PC-9 (cell line): ENCODE measurements at regions of chr18 and their contacts with region 1.

Region 1: GRCh38 chr18:21538230-21538629 is 62.3 kb downstream of the ESCO1 start:
- DNase-seq: no peak
- H3K4me3 ChIP-seq: no peak overlapping the region
- H3K27ac ChIP-seq: no peak overlapping the region
- H3K4me1 ChIP-seq: no peaks in the 10 kb centered on the region
- H3K27me3 ChIP-seq: no peaks in the 10 kb centered on the region
- CTCF ChIP-seq: no peak

Region 2: DNA sequence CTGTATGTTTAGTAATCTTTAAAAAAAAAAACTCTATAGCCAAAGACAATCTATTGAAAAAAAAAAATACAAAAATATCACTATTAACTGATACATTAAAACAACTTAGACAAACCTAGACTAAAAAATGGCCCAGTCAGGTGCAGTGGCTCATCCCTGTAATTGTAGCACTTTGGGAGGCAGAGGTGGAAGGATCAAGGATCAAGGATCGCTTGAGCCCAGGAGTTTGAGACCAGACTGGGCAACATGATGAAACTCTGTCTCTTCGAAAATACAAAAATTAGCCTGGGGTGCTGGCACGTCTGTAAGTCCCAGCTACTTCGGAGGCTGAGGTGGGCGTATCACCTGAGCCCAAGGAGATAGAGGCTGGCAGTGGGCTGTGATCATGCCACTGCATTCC is 46.2 kb after region 1 on chr18:
- CTCF ChIA-PET with region 1: no interaction called
- POLR2A ChIA-PET with region 1: no interaction called
- intact Hi-C with region 1: loop called (anchors 10 kb)
- DNase-seq: no peak
- H3K4me3 ChIP-seq: no peak overlapping the region
- H3K27ac ChIP-seq: no peak overlapping the region
- H3K4me1 ChIP-seq: no peaks in the 10 kb centered on the region
- H3K27me3 ChIP-seq: no peaks in the 10 kb centered on the region
- CTCF ChIP-seq: no peak